CD4-positive, alpha-beta memory T cell (primary cell): ENCODE measurements at regions of chr10 and their contacts with region 1.

Region 1: DNA sequence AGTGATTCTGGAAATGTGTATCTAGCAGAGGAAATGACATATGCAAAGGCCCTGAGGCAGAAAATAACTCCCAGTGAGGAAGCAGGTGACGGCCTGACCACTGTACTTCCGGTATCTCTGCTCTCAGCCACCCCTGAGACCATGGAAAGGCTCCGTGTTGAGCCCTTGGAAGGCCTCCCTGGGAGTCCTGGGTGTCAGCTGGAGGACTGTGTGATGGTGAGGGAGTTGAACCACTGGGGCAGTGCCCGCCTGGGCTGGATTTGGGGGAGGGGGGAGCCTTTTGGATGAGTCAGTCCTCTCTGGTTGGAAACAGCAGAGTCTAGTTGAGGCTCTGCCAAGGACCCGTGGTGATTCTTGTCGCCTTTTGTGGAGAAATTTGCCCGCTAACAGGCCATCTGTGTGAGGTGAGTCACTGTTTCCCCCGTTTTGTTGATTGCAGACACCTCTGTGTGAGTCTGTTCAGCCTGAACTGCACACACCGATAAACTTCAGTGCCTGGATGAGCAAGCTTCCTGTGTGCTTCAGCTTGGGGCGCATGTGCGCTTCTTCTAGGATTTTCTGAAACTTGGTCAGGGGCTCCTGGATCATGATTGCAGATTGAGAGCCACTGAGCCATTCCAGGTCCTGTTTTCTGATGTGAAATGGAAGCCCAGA is 98.6 kb downstream of the GRK5 start:
- DNase-seq: peak; percentile 78 to 98 (median 81)
- H3K4me3 ChIP-seq: peak overlapping the region; percentile 66 to 70
- H3K4me3 Mint-ChIP-seq: peak overlapping the region; percentile 87 to 94 (median 90)
- H3K27ac ChIP-seq: peak overlapping the region; percentile 75
- H3K27ac Mint-ChIP-seq: peak overlapping the region; percentile 96 to 99 (median 98)
- H3K4me1 ChIP-seq: peaks cover 62% of the 10 kb centered on the region
- H3K4me1 Mint-ChIP-seq: peaks cover 46 to 76% (median 63%) of the 10 kb centered on the region in 4 donors
- H3K27me3 ChIP-seq: no peaks in the 10 kb centered on the region
- H3K27me3 Mint-ChIP-seq: peaks cover 0 to 6% of the 10 kb centered on the region in 2 donors

Region 2: GRCh38 chr10:119199231-119199992 is 106.6 kb before region 1 on chr10:
- CTCF ChIA-PET with region 1: interaction called, 13 read pairs
- POLR2A ChIA-PET with region 1: no interaction called
- intact Hi-C with region 1: no loop called
- DNase-seq: peak in 4 of 5 donors; percentile 34 to 54 (median 50)
- H3K4me3 ChIP-seq: no peak overlapping the region
- H3K4me3 Mint-ChIP-seq: no peak overlapping the region
- H3K27ac ChIP-seq: no peak overlapping the region
- H3K27ac Mint-ChIP-seq: no peak overlapping the region
- H3K4me1 ChIP-seq: no peaks in the 10 kb centered on the region
- H3K4me1 Mint-ChIP-seq: peaks cover 0 to 1% (median 0%) of the 10 kb centered on the region in 4 donors
- H3K27me3 ChIP-seq: no peaks in the 10 kb centered on the region
- H3K27me3 Mint-ChIP-seq: no peaks in the 10 kb centered on the region

Region 3: DNA sequence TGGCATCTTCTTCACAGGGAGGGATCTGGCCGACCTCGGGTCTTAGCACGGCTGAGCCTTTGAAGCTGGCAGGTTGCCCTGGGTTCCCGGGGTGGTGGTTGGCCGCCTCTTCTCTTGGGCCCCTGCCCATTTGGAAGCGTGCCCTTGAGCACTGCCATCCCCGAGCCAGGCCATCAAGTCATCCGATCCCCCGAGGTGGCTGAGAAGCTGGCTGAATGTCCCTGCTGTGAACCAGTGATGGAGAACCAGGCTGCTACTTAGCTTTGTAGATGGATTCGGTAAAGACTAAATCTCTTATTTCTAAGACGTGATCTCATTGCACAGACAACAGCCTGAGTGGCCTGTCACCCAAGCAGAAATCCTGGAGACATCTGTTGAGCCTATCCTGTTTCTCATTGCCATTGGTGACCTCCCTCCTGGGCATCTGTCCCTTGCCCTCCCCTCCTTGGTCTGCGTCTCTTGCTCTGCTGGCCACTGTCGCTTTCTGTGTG is 24.4 kb before region 1 on chr10:
- CTCF ChIA-PET with region 1: interaction called, 3 read pairs
- POLR2A ChIA-PET with region 1: interaction called, 14 read pairs
- intact Hi-C with region 1: loop called (anchors 2 kb)
- DNase-seq: no peak
- H3K4me3 ChIP-seq: no peak overlapping the region
- H3K4me3 Mint-ChIP-seq: peak overlapping the region in 1 of 8 donors; percentile 29
- H3K27ac ChIP-seq: no peak overlapping the region
- H3K27ac Mint-ChIP-seq: peak overlapping the region in 4 of 7 donors; percentile 23 to 57 (median 55)
- H3K4me1 ChIP-seq: peaks cover 61% of the 10 kb centered on the region
- H3K4me1 Mint-ChIP-seq: peaks cover 30 to 84% (median 60%) of the 10 kb centered on the region in 4 donors
- H3K27me3 ChIP-seq: no peaks in the 10 kb centered on the region
- H3K27me3 Mint-ChIP-seq: no peaks in the 10 kb centered on the region

Region 4: DNA sequence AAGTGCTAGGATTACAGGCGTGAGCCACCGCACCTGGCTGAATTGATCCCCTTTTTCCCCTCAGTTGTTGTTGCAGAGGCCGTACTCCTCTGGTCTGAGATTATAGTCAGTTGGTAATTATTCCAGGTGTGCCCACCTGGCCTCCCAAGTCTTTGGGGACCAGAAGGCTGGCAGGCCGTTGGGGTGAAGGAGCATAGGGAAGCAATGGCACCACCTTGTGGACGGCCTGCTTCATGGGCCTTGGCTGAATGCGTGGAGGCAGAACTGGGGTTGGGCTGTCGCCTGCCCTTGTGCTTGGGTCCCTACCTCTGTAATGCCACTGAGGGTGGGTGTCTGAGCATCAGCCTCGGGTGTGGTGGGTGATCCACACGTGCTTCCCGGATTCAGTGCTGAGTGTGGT is 110.9 kb after region 1 on chr10:
- CTCF ChIA-PET with region 1: no interaction called
- POLR2A ChIA-PET with region 1: interaction called, 3 read pairs
- intact Hi-C with region 1: loop called (anchors 5 kb)
- DNase-seq: peak; percentile 54 to 65 (median 62)
- H3K4me3 ChIP-seq: no peak overlapping the region
- H3K4me3 Mint-ChIP-seq: no peak overlapping the region
- H3K27ac ChIP-seq: no peak overlapping the region
- H3K27ac Mint-ChIP-seq: peak overlapping the region in 1 of 7 donors; percentile 12
- H3K4me1 ChIP-seq: no peaks in the 10 kb centered on the region
- H3K4me1 Mint-ChIP-seq: peaks cover 0 to 2% (median under 1%) of the 10 kb centered on the region in 4 donors
- H3K27me3 ChIP-seq: no peaks in the 10 kb centered on the region
- H3K27me3 Mint-ChIP-seq: no peaks in the 10 kb centered on the region

Region 5: DNA sequence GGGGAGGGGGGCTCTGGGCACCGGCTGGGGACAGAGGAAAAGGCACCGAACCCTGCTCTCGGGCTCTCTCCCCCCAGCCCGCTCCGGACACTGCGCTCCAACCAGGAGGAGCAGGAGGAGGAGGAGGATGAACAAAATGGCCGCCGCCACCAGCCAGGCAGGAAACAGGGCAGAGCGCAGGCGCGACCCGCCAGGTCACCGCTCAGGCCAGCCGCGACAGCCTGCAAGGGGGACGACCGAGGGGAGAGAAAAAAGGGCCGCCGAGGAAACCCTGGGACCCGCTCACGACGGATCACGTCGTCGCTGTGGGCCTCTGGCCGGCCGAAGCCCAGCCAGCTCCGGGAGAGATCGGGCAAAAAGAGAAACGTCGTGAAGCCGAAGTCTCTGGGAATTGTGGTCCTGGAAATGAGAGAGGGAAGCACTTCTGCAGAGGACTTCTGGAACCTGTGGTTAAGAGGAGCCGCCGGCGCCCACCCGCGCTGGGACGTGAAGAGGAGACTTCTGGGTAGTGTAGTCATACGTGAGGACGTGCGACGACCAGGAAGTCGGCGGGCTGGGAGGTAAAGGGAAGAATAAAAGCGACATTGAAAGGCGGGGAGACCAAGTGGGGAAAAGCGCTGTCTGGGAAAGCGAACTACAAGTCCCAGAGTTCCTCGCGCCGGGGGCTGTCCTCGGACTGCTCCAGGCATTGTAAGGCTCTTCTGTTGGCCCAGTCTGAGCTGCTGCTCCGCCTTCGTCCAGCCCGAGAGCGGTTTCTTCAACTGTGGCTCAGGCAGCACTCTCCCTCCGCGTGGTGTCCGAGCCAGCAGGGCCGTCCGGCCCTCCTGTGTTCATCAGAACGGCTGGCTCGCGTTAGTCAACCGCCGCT is 290.8 kb after region 1 on chr10 and contains the start of gene TIAL1:
- CTCF ChIA-PET with region 1: no interaction called
- POLR2A ChIA-PET with region 1: interaction called, 3 read pairs
- intact Hi-C with region 1: loop called (anchors 5 kb)
- DNase-seq: peak; percentile 89 to 97 (median 91)
- H3K4me3 ChIP-seq: peak within 1 kb of the TSS; percentile 83 to 99
- H3K4me3 Mint-ChIP-seq: peak within 1 kb of the TSS; percentile 93 to 100 (median 99)
- H3K27ac ChIP-seq: peak within 1 kb of the TSS; percentile 98
- H3K27ac Mint-ChIP-seq: peak within 1 kb of the TSS; percentile 97 to 100 (median 99)
- H3K4me1 ChIP-seq: peaks cover 43% of the 10 kb centered on the region
- H3K4me1 Mint-ChIP-seq: peaks cover 37 to 57% (median 44%) of the 10 kb centered on the region in 4 donors
- H3K27me3 ChIP-seq: no peaks in the 10 kb centered on the region
- H3K27me3 Mint-ChIP-seq: no peaks in the 10 kb centered on the region
- total RNA-seq, gene TIAL1: 201 to 212 TPM